MCF 10A (cell line): ENCODE measurements at regions of chr1 and their contacts with region 1.

Region 1: DNA sequence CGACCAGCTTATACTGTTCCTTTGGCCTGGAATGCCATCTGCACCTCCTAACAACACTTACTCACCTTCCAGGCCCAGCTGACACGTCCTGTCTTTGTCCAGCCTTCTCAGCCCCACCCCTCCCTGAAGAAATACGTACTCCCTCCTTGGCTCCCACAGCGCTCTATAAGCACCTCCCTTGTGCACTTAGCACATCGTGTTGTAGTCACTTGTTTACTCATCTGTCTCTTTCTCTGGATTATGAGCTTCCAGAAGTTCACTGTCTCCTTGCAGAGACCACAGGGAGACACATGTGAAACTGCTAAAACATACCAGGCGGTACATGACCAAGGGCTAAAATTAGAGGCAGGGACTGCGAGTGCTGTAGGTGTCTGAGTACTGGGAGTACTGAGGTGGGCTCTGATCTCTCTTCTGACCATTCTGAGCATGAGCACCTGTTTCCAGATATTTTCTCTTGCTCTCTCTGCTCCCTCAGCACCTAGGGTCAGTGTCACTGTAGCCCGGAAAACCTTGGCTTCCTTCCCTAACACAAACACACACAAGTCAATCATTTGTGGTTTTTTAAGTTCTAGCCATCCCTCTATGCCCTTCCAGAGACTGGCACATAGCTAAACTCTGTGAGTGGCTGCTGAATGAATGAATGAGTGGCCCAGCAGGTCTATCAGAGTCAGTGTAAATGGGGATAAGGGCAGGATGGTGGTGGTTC is 5.1 kb downstream of the DCST1 start:
- DNase-seq: peak; percentile 97
- H3K4me3 Mint-ChIP-seq: peak overlapping the region; percentile 15
- H3K27ac Mint-ChIP-seq: peak overlapping the region; percentile 79
- H3K4me1 Mint-ChIP-seq: peaks cover 37% of the 10 kb centered on the region
- H3K27me3 Mint-ChIP-seq: no peaks in the 10 kb centered on the region
- CTCF ChIP-seq: no peak

Region 2: GRCh38 chr1:154961497-154962262 is 77.1 kb before region 1 on chr1 and contains the start of gene PYGO2:
- CTCF ChIA-PET with region 1: interaction called, 12 read pairs
- POLR2A ChIA-PET with region 1: interaction called, 23 read pairs
- intact Hi-C with region 1: no loop called
- DNase-seq: peak; percentile 85
- H3K4me3 Mint-ChIP-seq: peak within 1 kb of the TSS; percentile 73
- H3K27ac Mint-ChIP-seq: peak within 1 kb of the TSS; percentile 33
- H3K4me1 Mint-ChIP-seq: peaks cover 39% of the 10 kb centered on the region
- H3K27me3 Mint-ChIP-seq: no peaks in the 10 kb centered on the region
- CTCF ChIP-seq: peak; percentile 81
- total RNA-seq, gene PYGO2: 32.1 and 35.9 TPM in 2 replicates

Region 3: GRCh38 chr1:155001675-155002463 is 36.9 kb before region 1 on chr1:
- CTCF ChIA-PET with region 1: interaction called, 20 read pairs
- POLR2A ChIA-PET with region 1: interaction called, 70 read pairs
- intact Hi-C with region 1: no loop called
- DNase-seq: peak; percentile 100
- H3K4me3 Mint-ChIP-seq: peak overlapping the region; percentile 90
- H3K27ac Mint-ChIP-seq: peak overlapping the region; percentile 97
- H3K4me1 Mint-ChIP-seq: peaks cover 52% of the 10 kb centered on the region
- H3K27me3 Mint-ChIP-seq: no peaks in the 10 kb centered on the region
- CTCF ChIP-seq: peak; percentile 34

Region 4: GRCh38 chr1:155017041-155017945 is 21.5 kb before region 1 on chr1:
- CTCF ChIA-PET with region 1: interaction called, 390 read pairs
- POLR2A ChIA-PET with region 1: interaction called, 275 read pairs
- intact Hi-C with region 1: loop called (anchors 2 kb)
- DNase-seq: peak; percentile 99
- H3K4me3 Mint-ChIP-seq: peak overlapping the region; percentile 62
- H3K27ac Mint-ChIP-seq: peak overlapping the region; percentile 80
- H3K4me1 Mint-ChIP-seq: peaks cover 78% of the 10 kb centered on the region
- H3K27me3 Mint-ChIP-seq: no peaks in the 10 kb centered on the region
- CTCF ChIP-seq: peak; percentile 100

Region 5: GRCh38 chr1:155105604-155106022 is 66.9 kb after region 1 on chr1:
- CTCF ChIA-PET with region 1: no interaction called
- POLR2A ChIA-PET with region 1: no interaction called
- intact Hi-C with region 1: no loop called
- DNase-seq: peak; percentile 26
- H3K4me3 Mint-ChIP-seq: no peak overlapping the region
- H3K27ac Mint-ChIP-seq: peak overlapping the region; percentile 4
- H3K4me1 Mint-ChIP-seq: peaks cover 18% of the 10 kb centered on the region
- H3K27me3 Mint-ChIP-seq: no peaks in the 10 kb centered on the region
- CTCF ChIP-seq: no peak

Region 6: GRCh38 chr1:155127105-155127964 is 88.6 kb after region 1 on chr1 and contains the start of gene EFNA1:
- CTCF ChIA-PET with region 1: no interaction called
- POLR2A ChIA-PET with region 1: interaction called, 10 read pairs
- intact Hi-C with region 1: no loop called
- DNase-seq: peak; percentile 99
- H3K4me3 Mint-ChIP-seq: peak within 1 kb of the TSS; percentile 100
- H3K27ac Mint-ChIP-seq: peak within 1 kb of the TSS; percentile 90
- H3K4me1 Mint-ChIP-seq: peaks cover 60% of the 10 kb centered on the region
- H3K27me3 Mint-ChIP-seq: no peaks in the 10 kb centered on the region
- CTCF ChIP-seq: no peak
- total RNA-seq, gene EFNA1: 38.9 and 42.3 TPM in 2 replicates

Region 7: DNA sequence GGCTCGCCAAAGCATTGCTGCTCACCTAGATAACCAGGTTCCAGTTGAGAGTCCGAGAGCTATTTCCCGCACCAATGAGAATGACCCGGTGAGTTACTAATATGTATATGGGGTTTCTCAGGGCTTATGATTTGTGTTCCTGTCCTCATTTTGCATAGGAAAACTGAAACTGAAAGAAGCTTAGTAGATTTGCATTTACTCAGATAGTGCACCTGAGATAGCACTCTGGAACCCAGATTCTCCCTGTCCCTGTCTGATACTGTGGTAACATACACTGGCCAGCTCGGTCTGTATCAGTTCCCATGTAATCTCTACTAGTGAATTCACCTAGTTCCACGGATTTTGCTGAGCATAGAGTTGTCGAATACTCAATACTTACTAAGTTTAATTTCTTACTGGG is 678.3 kb after region 1 on chr1:
- CTCF ChIA-PET with region 1: no interaction called
- POLR2A ChIA-PET with region 1: no interaction called
- intact Hi-C with region 1: no loop called
- DNase-seq: no peak
- H3K4me3 Mint-ChIP-seq: no peak overlapping the region
- H3K27ac Mint-ChIP-seq: no peak overlapping the region
- H3K4me1 Mint-ChIP-seq: no peaks in the 10 kb centered on the region
- H3K27me3 Mint-ChIP-seq: no peaks in the 10 kb centered on the region
- CTCF ChIP-seq: no peak